ENCODE measurements at regions of chr6 and their contacts with region 1.

Region 1: DNA sequence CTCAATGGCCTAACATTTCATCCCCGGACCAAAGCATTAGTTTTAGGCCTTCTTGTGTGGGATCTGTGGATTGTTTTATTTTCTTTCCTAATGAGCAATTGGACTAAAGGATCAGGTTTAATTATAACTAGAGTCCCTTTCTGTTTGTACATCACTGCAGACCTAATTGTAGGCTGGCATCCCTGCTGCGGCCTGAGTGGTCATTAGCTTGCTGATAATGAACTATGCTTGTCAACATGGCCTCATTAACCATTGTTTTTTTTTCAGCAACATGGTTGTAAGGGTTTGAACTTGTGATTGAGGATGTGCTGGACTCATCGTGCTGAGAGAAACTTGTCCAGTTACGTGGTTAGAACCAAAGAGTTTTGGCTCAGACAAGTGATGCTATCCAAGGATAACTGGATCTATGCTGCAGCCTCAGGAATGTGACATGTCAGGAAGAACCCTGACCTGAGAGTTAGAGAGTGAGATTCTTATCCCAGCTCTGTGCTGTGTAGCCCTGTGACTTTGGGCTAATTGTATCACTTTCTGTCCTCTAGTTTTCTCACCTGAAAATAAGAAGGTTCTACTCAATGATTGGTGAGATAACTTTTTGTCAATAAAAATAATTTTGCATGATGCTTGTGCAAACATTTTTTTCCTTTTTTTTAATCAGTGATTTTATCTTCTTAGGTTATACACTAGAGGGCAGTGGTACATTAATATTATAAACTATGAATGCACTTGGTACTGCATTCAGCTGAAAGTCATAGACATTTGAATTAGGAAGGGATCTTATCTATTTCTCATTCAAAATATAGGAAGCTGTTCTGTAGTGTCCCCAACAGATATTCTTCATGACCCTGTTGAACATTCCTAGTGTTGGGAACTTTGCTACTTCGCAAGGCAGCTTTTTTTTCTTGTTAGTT is 140.9 kb downstream of the RNF144B start:
- H3K4me3 Mint-ChIP-seq: no peak overlapping the region
- H3K27ac Mint-ChIP-seq: no peak overlapping the region
- H3K4me1 Mint-ChIP-seq: no peaks in the 10 kb centered on the region
- H3K27me3 Mint-ChIP-seq: peaks cover 9% of the 10 kb centered on the region

Region 2: DNA sequence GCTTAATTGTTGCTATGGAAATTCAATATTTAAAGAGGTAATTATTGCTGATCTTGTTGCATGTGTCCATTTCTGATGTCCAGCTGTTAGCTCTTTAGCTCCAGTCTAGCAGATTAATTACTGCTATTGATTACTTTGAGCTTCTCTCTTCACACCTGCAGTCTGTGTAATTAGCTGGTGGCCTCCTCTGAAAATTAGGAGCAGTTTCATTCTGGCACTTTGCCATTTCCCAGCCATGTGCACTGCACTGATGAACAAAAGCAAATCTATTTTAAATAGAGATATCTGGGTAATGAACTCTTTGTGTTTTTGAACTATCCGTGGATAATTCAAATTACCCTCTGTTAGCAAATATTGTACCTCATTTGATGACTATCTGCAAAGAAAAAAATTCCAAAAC is 134.9 kb after region 1 on chr6:
- intact Hi-C with region 1: no loop called
- H3K4me3 Mint-ChIP-seq: no peak overlapping the region
- H3K27ac Mint-ChIP-seq: no peak overlapping the region
- H3K4me1 Mint-ChIP-seq: no peaks in the 10 kb centered on the region
- H3K27me3 Mint-ChIP-seq: no peaks in the 10 kb centered on the region

Region 3: DNA sequence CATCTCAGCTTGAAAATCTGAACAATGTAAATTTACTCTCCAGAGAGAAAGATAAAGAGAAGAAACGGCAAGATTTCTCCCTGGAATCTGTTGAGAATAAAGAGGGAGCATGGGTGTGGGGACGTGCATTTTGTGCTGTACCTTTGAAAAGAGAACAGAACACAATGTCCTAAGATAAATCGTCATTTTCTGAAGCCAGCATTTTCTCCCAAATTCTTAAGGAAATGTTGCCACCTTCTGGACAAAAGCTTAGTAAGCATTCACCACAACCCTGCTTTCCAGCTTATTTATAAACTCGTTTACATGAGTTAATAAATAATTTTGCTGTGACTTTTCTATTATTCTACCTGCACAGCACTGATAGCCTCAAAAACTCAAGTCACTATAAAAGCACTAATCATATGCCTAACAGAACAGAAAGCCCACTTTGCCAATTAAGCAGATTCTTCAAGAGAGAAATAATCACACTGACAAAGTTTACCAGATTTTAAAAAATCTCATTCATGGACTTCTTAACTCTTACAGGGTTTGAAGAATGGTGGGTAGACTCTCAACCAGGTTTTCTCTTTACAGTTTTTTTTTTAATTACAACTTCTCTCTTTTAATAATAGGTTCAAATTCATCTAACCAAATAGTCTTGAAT is 1528.4 kb after region 1 on chr6:
- intact Hi-C with region 1: loop called (anchors 5 kb)
- H3K4me3 Mint-ChIP-seq: no peak overlapping the region
- H3K27ac Mint-ChIP-seq: no peak overlapping the region
- H3K4me1 Mint-ChIP-seq: peaks cover 6% of the 10 kb centered on the region
- H3K27me3 Mint-ChIP-seq: no peaks in the 10 kb centered on the region